Activated T-helper 1 cell treated with anti-CD3 and anti-CD28 coated beads, Interleukin-12 subunit alpha, Interleukin-12 subunit beta, Interleukin-2, Interleukin-4 antibody, amounts not matched to agents 30 ng/mL and 10 ng/mL and 1 ng/mL, durations not matched to agents 14 hours and 24 hours and 36 hours (primary cell): ENCODE measurements at regions of chr1 and their contacts with region 1.

Region 1: DNA sequence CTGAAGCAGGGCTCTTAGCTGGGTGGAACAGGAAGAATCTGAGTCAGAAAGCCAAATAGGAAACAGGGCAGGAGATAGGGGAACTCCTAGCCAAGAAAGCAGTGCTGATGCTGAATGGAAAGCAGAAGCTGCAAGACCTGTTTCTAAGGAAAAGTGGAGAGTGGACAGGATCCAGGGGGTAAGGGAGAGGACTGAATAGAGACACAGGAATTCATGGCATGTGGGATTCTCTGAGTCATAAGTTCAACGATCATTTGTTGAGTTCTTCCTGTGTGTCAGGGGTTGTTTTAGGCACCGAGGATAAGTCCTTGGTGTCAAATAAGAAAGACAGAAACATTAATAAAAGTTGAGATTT is 153.8 kb upstream of the FGGY start:
- DNase-seq: no peak
- H3K4me3 Mint-ChIP-seq: peak overlapping the region; percentile 8
- H3K27ac Mint-ChIP-seq: peak overlapping the region; percentile 62
- H3K4me1 Mint-ChIP-seq: peaks cover 86% of the 10 kb centered on the region
- H3K27me3 Mint-ChIP-seq: no peaks in the 10 kb centered on the region

Region 2: GRCh38 chr1:58089898-58090534 is 1053.1 kb before region 1 on chr1:
- intact Hi-C with region 1: no loop called
- DNase-seq: no peak
- H3K4me3 Mint-ChIP-seq: no peak overlapping the region
- H3K27ac Mint-ChIP-seq: no peak overlapping the region
- H3K4me1 Mint-ChIP-seq: no peaks in the 10 kb centered on the region
- H3K27me3 Mint-ChIP-seq: no peaks in the 10 kb centered on the region

Region 3: GRCh38 chr1:58857680-58858673 is 285.1 kb before region 1 on chr1:
- intact Hi-C with region 1: loop called (anchors 5 kb)
- DNase-seq: peak; percentile 43
- H3K4me3 Mint-ChIP-seq: peak overlapping the region; percentile 61
- H3K27ac Mint-ChIP-seq: peak overlapping the region; percentile 95
- H3K4me1 Mint-ChIP-seq: peaks cover 74% of the 10 kb centered on the region
- H3K27me3 Mint-ChIP-seq: no peaks in the 10 kb centered on the region

Region 4: GRCh38 chr1:59046730-59047157 is 96.4 kb before region 1 on chr1:
- intact Hi-C with region 1: loop called (anchors 1 kb)
- DNase-seq: peak; percentile 62
- H3K4me3 Mint-ChIP-seq: peak overlapping the region; percentile 67
- H3K27ac Mint-ChIP-seq: peak overlapping the region; percentile 71
- H3K4me1 Mint-ChIP-seq: peaks cover 77% of the 10 kb centered on the region
- H3K27me3 Mint-ChIP-seq: no peaks in the 10 kb centered on the region

Region 5: GRCh38 chr1:59061876-59062275 is 81.2 kb before region 1 on chr1:
- intact Hi-C with region 1: loop called (anchors 5 kb)
- DNase-seq: no peak
- H3K4me3 Mint-ChIP-seq: no peak overlapping the region
- H3K27ac Mint-ChIP-seq: no peak overlapping the region
- H3K4me1 Mint-ChIP-seq: peaks cover 49% of the 10 kb centered on the region
- H3K27me3 Mint-ChIP-seq: no peaks in the 10 kb centered on the region

Region 6: GRCh38 chr1:59296358-59297256 is 153.5 kb after region 1 on chr1 and contains the start of gene FGGY:
- intact Hi-C with region 1: loop called (anchors 2 kb)
- DNase-seq: peak; percentile 86
- H3K4me3 Mint-ChIP-seq: peak within 1 kb of the TSS; percentile 91
- H3K27ac Mint-ChIP-seq: peak within 1 kb of the TSS; percentile 91
- H3K4me1 Mint-ChIP-seq: peaks cover 48% of the 10 kb centered on the region
- H3K27me3 Mint-ChIP-seq: no peaks in the 10 kb centered on the region
- total RNA-seq, gene FGGY: 7.1 and 8.2 TPM in 2 replicates

Region 7: DNA sequence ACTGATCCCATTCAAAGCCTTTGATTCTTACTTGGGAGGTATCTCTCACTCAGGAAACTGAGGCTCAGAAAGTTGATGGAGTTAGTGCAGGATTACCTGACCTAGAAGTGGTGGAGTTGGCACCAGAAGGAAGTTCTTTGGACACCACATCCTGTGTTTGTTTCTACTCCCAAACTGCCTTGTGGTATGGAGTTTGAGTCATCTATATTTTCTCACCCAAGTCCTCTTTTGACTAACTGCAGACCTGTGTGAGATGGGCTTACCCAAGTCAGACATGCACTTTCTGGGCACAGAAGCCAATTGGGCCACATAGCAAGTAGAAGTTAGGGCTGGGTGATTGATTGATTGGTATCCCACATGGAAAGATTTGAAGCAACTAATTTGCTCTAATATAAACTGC is 189.9 kb after region 1 on chr1:
- intact Hi-C with region 1: loop called (anchors 2 kb)
- DNase-seq: peak; percentile 47
- H3K4me3 Mint-ChIP-seq: peak overlapping the region; percentile 15
- H3K27ac Mint-ChIP-seq: peak overlapping the region; percentile 78
- H3K4me1 Mint-ChIP-seq: peaks cover 44% of the 10 kb centered on the region
- H3K27me3 Mint-ChIP-seq: no peaks in the 10 kb centered on the region

Region 8: GRCh38 chr1:59477286-59477685 is 334.2 kb after region 1 on chr1:
- intact Hi-C with region 1: loop called (anchors 2 kb)
- DNase-seq: peak; percentile 30
- H3K4me3 Mint-ChIP-seq: peak overlapping the region; percentile 15
- H3K27ac Mint-ChIP-seq: peak overlapping the region; percentile 84
- H3K4me1 Mint-ChIP-seq: peaks cover 9% of the 10 kb centered on the region
- H3K27me3 Mint-ChIP-seq: no peaks in the 10 kb centered on the region